Psoas muscle (tissue), 8 donors: ENCODE measurements at regions of chr10 and their contacts with region 1.

Region 1: DNA sequence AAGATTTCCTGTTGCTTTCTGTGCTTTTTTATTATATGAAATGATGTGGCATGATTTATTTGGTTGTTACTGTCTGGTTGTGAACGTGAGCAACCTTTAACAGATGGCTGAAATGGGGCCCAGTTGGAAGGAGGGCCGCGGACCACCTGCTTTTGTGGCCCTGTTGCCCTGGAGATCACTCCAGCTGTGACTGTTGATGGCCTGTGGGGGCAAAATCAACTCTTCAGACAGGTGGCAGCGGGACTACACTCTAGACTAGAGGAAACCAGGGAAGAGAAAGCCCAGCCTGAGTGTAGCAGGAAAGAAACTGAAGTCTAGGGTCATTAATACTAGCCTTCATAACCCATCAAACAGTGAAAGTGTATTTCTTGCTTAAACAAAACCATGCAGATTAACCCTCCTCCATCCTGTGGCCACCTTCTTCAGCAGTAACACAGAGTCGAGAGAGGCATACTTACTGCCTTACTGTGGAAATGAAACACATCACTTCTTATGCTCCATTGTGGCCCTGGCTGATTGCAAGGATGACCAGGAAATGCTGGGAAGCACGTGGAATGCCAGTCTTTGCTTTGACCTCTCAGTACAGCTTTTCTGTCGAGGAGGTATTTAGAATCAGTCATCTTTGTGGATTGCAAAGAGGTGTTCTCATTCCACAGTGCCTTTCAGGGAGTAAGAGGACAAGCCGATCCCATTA is 80.5 kb downstream of the CCNY start:
- DNase-seq: no peak
- ATAC-seq: no peak
- H3K4me3 ChIP-seq: no peak overlapping the region
- H3K27ac ChIP-seq: peak overlapping the region; percentile 7
- H3K4me1 ChIP-seq: peaks cover 72% of the 10 kb centered on the region
- H3K27me3 ChIP-seq: no peaks in the 10 kb centered on the region
- CTCF ChIP-seq: no peak

Region 2: DNA sequence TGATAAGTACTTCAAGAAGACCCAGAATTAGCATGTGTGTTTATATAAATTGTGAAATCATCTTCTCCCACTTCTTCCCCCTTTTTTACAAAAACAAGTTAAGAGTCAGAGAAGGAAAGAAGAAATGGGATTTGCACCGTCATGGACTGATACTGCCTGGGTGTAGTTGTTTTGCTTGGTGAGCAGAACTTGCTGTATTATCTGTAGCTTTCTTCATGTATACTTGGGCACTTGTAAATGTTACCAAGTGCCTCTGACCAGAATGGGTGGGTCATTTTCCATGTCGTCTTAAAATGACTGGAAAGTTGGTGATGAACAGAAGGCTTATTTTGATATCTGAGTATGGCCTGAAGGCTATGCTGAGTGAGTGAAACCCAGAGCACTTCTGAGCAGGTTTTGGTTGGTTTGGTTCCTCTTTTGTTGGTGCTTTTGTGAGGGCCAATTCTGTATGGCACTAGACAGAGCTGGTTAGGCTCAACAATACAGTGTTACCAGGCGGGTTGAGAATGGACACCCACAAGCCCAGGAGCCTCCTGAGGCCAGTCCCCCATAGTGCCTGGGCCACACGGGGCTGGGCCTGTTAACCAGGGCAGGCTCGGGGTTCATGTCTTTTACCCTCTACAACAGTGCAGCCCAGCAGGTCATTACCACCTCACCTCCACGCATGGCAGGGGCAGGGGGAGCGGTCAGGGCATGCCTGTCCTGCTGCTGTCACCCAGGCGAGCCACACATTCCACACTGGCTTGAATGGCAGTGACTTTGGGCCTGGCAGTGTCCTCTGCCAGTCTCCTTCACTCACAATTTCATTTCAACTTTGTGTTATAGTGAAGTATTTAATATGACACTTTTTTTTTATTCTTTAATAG is 34.6 kb after region 1 on chr10:
- intact Hi-C with region 1: loop called in 1 of 2 experiments (anchors 5 kb)
- DNase-seq: no peak
- ATAC-seq: peak; percentile 52 to 76 (median 58)
- H3K4me3 ChIP-seq: no peak overlapping the region
- H3K27ac ChIP-seq: peak overlapping the region; percentile 59
- H3K4me1 ChIP-seq: peaks cover 79% of the 10 kb centered on the region
- H3K27me3 ChIP-seq: no peaks in the 10 kb centered on the region
- CTCF ChIP-seq: no peak

Region 3: DNA sequence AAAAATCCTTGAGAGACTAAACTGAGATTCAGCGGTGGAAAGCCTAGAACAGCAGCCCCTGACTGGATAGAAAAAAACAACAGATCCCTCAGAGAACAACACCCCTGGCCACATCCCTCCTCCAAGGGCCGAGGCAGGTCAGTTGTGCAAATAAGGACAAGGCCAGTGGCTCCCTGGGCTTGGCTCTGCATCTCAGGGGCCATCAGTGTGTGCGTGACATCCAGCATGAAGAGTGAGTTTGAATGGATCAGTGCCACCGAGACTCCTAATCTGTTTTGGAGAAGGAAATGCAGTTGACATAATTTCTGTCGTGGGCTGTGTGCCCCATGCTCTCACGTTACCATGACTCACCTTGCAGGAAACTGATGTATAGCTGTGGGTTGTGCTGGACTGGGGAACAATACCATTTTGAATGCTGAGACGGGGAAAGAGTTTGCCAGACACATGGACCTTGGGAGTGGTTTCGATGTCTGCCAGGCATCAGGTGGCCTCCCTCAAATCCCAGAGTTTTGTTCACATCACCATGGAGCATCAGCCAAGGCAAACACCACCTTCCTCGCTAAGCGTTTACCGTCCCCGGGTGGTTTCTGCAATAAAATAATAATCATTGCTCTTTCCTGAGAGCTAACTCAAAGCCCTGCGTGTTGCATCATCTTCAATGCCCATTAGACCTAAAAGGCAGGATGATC is 378.5 kb after region 1 on chr10:
- intact Hi-C with region 1: no loop called
- DNase-seq: no peak
- ATAC-seq: no peak
- H3K4me3 ChIP-seq: no peak overlapping the region
- H3K27ac ChIP-seq: no peak overlapping the region
- H3K4me1 ChIP-seq: no peaks in the 10 kb centered on the region
- H3K27me3 ChIP-seq: no peaks in the 10 kb centered on the region
- CTCF ChIP-seq: no peak